Activated CD8-positive, alpha-beta T cell treated with anti-CD3 and anti-CD28 coated beads, Interleukin-2, amount 10 ng/mL, durations not matched to agents 7 days and 5 days (primary cell): ENCODE measurements at regions of chr15 and their contacts with region 1.

Region 1: DNA sequence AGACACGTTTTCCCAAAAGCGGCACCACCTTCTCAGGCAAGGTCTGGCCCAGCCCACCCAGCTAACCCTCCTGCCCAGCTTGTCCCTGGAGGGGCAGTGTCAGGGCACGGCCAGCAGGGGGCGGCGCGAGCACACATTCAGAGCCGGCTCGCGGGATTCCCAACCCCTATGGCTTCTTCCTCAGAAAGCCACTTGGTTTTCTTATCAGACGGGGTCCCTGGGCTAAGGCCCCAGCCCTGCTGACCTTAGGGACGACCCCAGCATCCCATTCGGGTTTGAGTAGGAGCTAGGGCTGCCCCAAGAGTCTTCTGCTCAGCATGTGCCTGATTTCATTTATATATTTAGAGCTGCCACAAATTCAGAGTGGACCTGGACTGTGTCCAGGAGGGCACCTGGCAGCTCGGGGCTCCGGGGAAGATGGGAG is 14.5 kb downstream of the RLBP1 start:
- DNase-seq: peak; percentile 77
- ATAC-seq: peak; percentile 80
- H3K4me3 Mint-ChIP-seq: peak overlapping the region; percentile 23
- H3K27ac Mint-ChIP-seq: peak overlapping the region; percentile 29
- H3K4me1 Mint-ChIP-seq: peaks cover 44% of the 10 kb centered on the region
- H3K27me3 Mint-ChIP-seq: peaks cover 9% of the 10 kb centered on the region

Region 2: DNA sequence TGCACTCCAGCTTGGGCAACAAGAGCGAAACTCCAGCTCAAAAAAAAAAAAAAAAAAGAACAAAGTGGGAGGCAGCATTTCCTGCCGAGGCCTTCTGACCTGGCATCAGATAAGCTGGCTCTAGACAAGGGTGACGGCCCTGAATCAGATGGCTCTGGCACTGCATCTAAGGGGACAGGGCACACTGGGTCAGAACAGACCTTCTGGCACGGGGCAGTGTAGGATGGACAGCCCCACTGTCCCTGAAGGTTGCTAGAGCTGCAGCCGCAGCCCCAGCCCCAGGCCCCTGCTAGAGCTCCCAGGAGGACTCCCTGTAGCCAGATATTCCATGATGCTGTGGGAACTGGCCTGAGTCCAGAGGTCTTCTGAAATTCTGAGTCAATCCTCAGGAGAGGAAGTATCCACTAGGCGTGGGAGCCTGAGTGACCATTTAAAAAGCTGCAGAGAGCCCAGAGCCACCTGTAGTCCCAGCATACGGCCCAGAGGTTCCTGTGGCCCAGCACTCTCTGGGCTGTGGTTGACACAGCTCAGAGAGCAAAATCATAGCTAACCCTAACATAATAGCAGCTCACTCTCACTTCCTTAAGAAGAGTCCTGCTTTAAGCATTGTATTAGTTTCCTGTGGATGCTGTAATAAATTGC is 224.5 kb before region 1 on chr15:
- CTCF ChIA-PET with region 1: no interaction called
- POLR2A ChIA-PET with region 1: no interaction called
- DNase-seq: no peak
- ATAC-seq: no peak
- H3K4me3 Mint-ChIP-seq: no peak overlapping the region
- H3K27ac Mint-ChIP-seq: no peak overlapping the region
- H3K4me1 Mint-ChIP-seq: no peaks in the 10 kb centered on the region
- H3K27me3 Mint-ChIP-seq: no peaks in the 10 kb centered on the region

Region 3: GRCh38 chr15:89041507-89041906 is 165.4 kb before region 1 on chr15:
- CTCF ChIA-PET with region 1: no interaction called
- POLR2A ChIA-PET with region 1: no interaction called
- DNase-seq: no peak
- ATAC-seq: no peak
- H3K4me3 Mint-ChIP-seq: no peak overlapping the region
- H3K27ac Mint-ChIP-seq: no peak overlapping the region
- H3K4me1 Mint-ChIP-seq: no peaks in the 10 kb centered on the region
- H3K27me3 Mint-ChIP-seq: peaks cover 19% of the 10 kb centered on the region

Region 4: GRCh38 chr15:89087830-89088604 is 118.9 kb before region 1 on chr15 and contains the start of gene ABHD2:
- CTCF ChIA-PET with region 1: interaction called, 14 read pairs
- POLR2A ChIA-PET with region 1: no interaction called
- DNase-seq: peak; percentile 99
- ATAC-seq: peak; percentile 99
- H3K4me3 Mint-ChIP-seq: no peak within 1 kb of the TSS
- H3K27ac Mint-ChIP-seq: no peak within 1 kb of the TSS
- H3K4me1 Mint-ChIP-seq: peaks cover 31% of the 10 kb centered on the region
- H3K27me3 Mint-ChIP-seq: no peaks in the 10 kb centered on the region
- total RNA-seq, gene ABHD2: 71.3 to 71.9 TPM

Region 5: DNA sequence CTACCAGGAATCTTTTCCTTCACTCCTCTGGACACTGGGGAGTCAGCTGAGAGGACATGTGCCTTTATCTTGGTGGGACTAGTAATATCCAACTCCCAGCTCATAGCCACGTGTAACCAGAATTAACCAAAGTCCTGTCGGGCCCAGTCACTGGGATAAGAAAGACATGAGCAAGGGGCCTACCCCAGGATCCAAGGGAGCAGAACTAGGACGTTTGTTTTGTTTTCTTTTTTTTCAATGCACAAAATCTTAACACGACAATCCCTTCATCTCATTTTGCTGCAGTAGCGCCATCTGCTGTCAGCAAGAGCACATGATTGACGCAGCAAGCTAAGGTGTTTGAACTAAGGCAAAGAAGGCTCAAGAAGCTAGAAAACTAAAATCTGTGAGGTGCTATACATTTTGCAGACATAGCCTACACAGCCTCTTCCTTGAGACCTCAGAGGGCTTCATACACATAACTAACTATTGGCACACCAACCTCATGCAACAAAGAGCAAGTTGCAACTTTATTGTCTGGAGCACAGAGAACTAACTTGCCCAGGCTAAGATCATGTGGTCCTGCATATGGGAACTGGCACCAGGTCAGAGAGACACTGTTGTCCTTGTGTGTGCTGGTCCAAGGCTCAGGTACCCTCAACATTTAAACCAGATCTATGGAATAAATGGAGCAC is 29.1 kb before region 1 on chr15:
- CTCF ChIA-PET with region 1: interaction called, 22 read pairs
- POLR2A ChIA-PET with region 1: no interaction called
- DNase-seq: peak; percentile 83
- ATAC-seq: peak; percentile 49
- H3K4me3 Mint-ChIP-seq: no peak overlapping the region
- H3K27ac Mint-ChIP-seq: no peak overlapping the region
- H3K4me1 Mint-ChIP-seq: peaks cover 6% of the 10 kb centered on the region
- H3K27me3 Mint-ChIP-seq: no peaks in the 10 kb centered on the region

Region 6: DNA sequence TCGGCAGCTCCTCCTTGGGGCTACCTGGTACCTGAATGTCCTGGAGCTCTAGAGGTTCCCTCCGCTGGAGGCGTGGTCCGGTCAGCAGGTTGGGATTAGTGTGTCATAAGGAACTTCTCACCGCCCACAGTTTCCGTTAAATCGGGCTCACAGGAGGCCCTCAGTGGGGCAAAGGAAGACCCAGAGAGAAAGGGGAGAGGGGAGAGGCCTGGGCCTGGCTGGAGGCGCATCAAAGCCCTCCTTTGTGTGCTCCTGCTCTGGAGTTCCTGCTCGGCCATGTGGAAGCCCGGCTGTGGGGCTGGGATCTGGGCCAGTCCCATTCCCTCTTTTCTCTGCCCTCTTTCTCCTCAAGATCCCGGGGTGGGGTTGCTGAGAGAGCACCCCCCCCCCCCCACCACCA is 14.6 kb after region 1 on chr15 and contains the start of gene RLBP1:
- CTCF ChIA-PET with region 1: interaction called, 43 read pairs
- POLR2A ChIA-PET with region 1: no interaction called
- DNase-seq: no peak
- ATAC-seq: no peak
- H3K4me3 Mint-ChIP-seq: no peak within 1 kb of the TSS
- H3K27ac Mint-ChIP-seq: no peak within 1 kb of the TSS
- H3K4me1 Mint-ChIP-seq: no peaks in the 10 kb centered on the region
- H3K27me3 Mint-ChIP-seq: peaks cover 6% of the 10 kb centered on the region
- total RNA-seq, gene RLBP1: not detected

Region 7: GRCh38 chr15:89243691-89244471 is 37.0 kb after region 1 on chr15 and contains the start of gene FANCI:
- CTCF ChIA-PET with region 1: interaction called, 82 read pairs
- POLR2A ChIA-PET with region 1: interaction called, 19 read pairs
- DNase-seq: peak; percentile 97
- ATAC-seq: peak; percentile 92
- H3K4me3 Mint-ChIP-seq: peak within 1 kb of the TSS; percentile 99
- H3K27ac Mint-ChIP-seq: peak within 1 kb of the TSS; percentile 96
- H3K4me1 Mint-ChIP-seq: peaks cover 45% of the 10 kb centered on the region
- H3K27me3 Mint-ChIP-seq: peaks cover 12% of the 10 kb centered on the region
- total RNA-seq, gene FANCI: 203 to 213 TPM

Region 8: GRCh38 chr15:89299896-89300295 is 93.0 kb after region 1 on chr15:
- CTCF ChIA-PET with region 1: interaction called, 22 read pairs
- POLR2A ChIA-PET with region 1: no interaction called
- DNase-seq: no peak
- ATAC-seq: no peak
- H3K4me3 Mint-ChIP-seq: no peak overlapping the region
- H3K27ac Mint-ChIP-seq: peak overlapping the region; percentile 17
- H3K4me1 Mint-ChIP-seq: peaks cover 34% of the 10 kb centered on the region
- H3K27me3 Mint-ChIP-seq: no peaks in the 10 kb centered on the region

Region 9: DNA sequence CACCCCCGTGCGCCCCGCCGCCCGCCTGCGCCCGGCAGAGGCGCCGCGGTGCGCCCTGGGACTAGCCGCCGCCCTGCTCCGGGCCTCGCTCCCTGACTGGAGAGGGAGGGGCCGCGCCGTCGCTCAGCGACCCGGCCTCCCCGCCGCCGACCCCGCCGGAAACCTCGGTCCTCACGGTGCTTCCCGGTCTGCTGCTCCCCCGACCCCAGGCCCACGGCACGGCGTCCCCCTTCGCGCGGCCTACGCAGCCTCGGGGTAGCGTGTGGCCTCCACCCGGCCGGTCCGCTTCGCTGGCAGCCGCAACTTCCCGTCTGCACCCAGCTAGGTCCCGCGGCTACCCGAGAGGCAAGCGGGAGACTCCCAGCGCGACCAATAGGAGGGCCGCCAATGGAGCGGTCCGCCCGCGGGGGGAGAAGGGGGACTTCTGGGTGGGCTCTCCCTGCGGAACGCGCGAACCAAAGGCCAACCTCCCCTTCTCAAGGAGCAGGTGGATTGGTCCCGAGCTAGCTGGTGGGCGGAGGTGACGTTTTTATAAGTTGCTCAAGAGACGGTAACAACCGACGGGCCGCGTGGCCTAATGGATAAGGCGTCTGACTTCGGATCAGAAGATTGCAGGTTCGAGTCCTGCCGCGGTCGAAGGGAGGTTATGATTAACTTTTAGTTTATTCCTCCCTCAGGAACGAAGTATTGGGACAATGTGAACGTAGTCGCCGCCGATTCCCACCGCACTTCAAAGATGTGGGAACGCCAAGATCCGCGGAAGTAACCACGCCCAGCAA is 127.8 kb after region 1 on chr15 and contains the start of gene POLG:
- CTCF ChIA-PET with region 1: interaction called, 38 read pairs
- POLR2A ChIA-PET with region 1: no interaction called
- DNase-seq: peak; percentile 99
- ATAC-seq: peak; percentile 94
- H3K4me3 Mint-ChIP-seq: peak within 1 kb of the TSS; percentile 86
- H3K27ac Mint-ChIP-seq: peak within 1 kb of the TSS; percentile 90
- H3K4me1 Mint-ChIP-seq: peaks cover 50% of the 10 kb centered on the region
- H3K27me3 Mint-ChIP-seq: peaks cover 11% of the 10 kb centered on the region
- total RNA-seq, gene POLG: 121 to 128 TPM

Region 10: GRCh38 chr15:89442671-89443307 is 235.9 kb after region 1 on chr15:
- CTCF ChIA-PET with region 1: no interaction called
- POLR2A ChIA-PET with region 1: no interaction called
- DNase-seq: peak; percentile 70
- ATAC-seq: peak; percentile 60
- H3K4me3 Mint-ChIP-seq: no peak overlapping the region
- H3K27ac Mint-ChIP-seq: no peak overlapping the region
- H3K4me1 Mint-ChIP-seq: peaks cover 5% of the 10 kb centered on the region
- H3K27me3 Mint-ChIP-seq: peaks cover 10% of the 10 kb centered on the region

Region 11: DNA sequence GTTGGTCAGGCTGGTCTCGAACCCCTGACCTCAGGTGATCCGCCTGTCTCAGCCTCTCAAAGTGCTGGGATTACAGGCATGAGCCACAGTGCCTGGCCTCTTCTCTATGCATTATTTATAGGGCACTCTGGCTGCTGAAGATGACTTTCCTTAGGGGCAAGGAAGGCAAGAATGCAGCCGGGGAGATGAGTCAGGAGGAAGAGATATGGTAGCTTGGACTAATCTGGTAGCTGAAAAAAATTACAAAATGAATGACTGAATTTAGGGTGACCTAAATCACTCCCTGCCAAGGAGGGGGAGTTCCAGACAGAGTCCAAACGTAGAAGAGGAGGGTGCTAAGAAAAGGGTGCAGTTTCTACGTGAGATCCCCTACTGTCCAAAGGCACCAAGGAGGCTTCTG is 275.2 kb after region 1 on chr15:
- CTCF ChIA-PET with region 1: no interaction called
- POLR2A ChIA-PET with region 1: no interaction called
- DNase-seq: no peak
- ATAC-seq: no peak
- H3K4me3 Mint-ChIP-seq: no peak overlapping the region
- H3K27ac Mint-ChIP-seq: no peak overlapping the region
- H3K4me1 Mint-ChIP-seq: peaks cover 5% of the 10 kb centered on the region
- H3K27me3 Mint-ChIP-seq: peaks cover 15% of the 10 kb centered on the region